Naive thymus-derived CD4-positive, alpha-beta T cell (primary cell): ENCODE measurements at regions of chr11 and their contacts with region 1.

Region 1: GRCh38 chr11:102341844-102342318 is 5.1 kb upstream of the BIRC2 start:
- DNase-seq: peak; percentile 20 to 76 (median 70)
- ATAC-seq: peak; percentile 61
- H3K4me3 ChIP-seq: no peak overlapping the region
- H3K4me3 Mint-ChIP-seq: peak overlapping the region in 1 of 10 donors; percentile 2
- H3K27ac ChIP-seq: no peak overlapping the region
- H3K27ac Mint-ChIP-seq: peak overlapping the region in 8 of 9 donors; percentile 17 to 84 (median 66)
- H3K4me1 ChIP-seq: peaks cover 5 to 11% of the 10 kb centered on the region in 2 donors
- H3K4me1 Mint-ChIP-seq: peaks cover 10 to 36% (median 22%) of the 10 kb centered on the region in 7 donors
- H3K27me3 ChIP-seq: no peaks in the 10 kb centered on the region
- H3K27me3 Mint-ChIP-seq: no peaks in the 10 kb centered on the region

Region 2: GRCh38 chr11:100863080-100863581 is 1478.8 kb before region 1 on chr11:
- CTCF ChIA-PET with region 1: no interaction called
- POLR2A ChIA-PET with region 1: no interaction called
- intact Hi-C with region 1: no loop called
- DNase-seq: no peak
- ATAC-seq: no peak
- H3K4me3 ChIP-seq: no peak overlapping the region
- H3K4me3 Mint-ChIP-seq: no peak overlapping the region
- H3K27ac ChIP-seq: no peak overlapping the region
- H3K27ac Mint-ChIP-seq: no peak overlapping the region
- H3K4me1 ChIP-seq: no peaks in the 10 kb centered on the region
- H3K4me1 Mint-ChIP-seq: no peaks in the 10 kb centered on the region
- H3K27me3 ChIP-seq: no peaks in the 10 kb centered on the region
- H3K27me3 Mint-ChIP-seq: no peaks in the 10 kb centered on the region

Region 3: DNA sequence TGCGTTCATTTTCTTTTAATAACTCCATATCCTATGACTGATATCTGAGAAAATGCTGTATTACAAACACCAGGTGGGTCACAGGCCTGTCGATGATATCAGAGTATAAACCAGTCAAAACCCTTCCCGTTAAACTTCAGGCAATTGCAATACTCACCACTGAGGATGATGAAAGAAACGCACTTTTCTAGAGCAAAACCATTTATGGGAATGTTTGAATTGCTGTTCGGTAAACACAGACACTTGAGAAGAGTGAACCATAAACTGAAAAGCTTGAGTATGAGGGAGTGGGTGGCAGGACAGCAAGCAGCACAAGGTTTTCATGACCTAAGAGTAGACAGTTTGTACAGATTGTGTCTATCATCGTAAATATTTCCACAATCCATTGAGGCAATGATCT is 566.8 kb before region 1 on chr11:
- CTCF ChIA-PET with region 1: no interaction called
- POLR2A ChIA-PET with region 1: no interaction called
- intact Hi-C with region 1: no loop called
- DNase-seq: no peak
- ATAC-seq: no peak
- H3K4me3 ChIP-seq: no peak overlapping the region
- H3K4me3 Mint-ChIP-seq: no peak overlapping the region
- H3K27ac ChIP-seq: no peak overlapping the region
- H3K27ac Mint-ChIP-seq: no peak overlapping the region
- H3K4me1 ChIP-seq: no peaks in the 10 kb centered on the region
- H3K4me1 Mint-ChIP-seq: no peaks in the 10 kb centered on the region
- H3K27me3 ChIP-seq: no peaks in the 10 kb centered on the region
- H3K27me3 Mint-ChIP-seq: no peaks in the 10 kb centered on the region

Region 4: DNA sequence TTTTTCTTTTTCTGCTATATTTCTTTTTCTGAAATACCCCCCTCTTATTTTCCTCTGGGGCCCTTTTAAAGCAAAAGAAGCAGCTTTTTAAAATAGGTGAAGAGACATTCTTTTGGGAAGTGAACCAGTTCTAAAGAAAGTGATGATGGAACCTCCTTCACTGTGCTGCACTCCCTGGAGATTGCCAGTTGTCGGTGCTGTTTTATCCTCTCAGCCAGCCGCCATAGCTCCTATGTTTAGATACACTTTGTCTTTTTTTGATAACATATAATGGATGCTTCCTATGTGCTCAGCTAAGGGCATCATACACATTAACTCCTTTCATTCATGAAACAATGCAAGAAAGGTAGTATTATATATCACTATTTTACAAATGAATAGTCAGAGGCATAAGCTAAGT is 280.6 kb before region 1 on chr11:
- CTCF ChIA-PET with region 1: no interaction called
- POLR2A ChIA-PET with region 1: no interaction called
- intact Hi-C with region 1: no loop called
- DNase-seq: no peak
- ATAC-seq: peak; percentile 12
- H3K4me3 ChIP-seq: no peak overlapping the region
- H3K4me3 Mint-ChIP-seq: no peak overlapping the region
- H3K27ac ChIP-seq: no peak overlapping the region
- H3K27ac Mint-ChIP-seq: no peak overlapping the region
- H3K4me1 ChIP-seq: no peaks in the 10 kb centered on the region
- H3K4me1 Mint-ChIP-seq: no peaks in the 10 kb centered on the region
- H3K27me3 ChIP-seq: no peaks in the 10 kb centered on the region
- H3K27me3 Mint-ChIP-seq: peaks cover 0 to 30% (median 23%) of the 10 kb centered on the region in 5 donors

Region 5: DNA sequence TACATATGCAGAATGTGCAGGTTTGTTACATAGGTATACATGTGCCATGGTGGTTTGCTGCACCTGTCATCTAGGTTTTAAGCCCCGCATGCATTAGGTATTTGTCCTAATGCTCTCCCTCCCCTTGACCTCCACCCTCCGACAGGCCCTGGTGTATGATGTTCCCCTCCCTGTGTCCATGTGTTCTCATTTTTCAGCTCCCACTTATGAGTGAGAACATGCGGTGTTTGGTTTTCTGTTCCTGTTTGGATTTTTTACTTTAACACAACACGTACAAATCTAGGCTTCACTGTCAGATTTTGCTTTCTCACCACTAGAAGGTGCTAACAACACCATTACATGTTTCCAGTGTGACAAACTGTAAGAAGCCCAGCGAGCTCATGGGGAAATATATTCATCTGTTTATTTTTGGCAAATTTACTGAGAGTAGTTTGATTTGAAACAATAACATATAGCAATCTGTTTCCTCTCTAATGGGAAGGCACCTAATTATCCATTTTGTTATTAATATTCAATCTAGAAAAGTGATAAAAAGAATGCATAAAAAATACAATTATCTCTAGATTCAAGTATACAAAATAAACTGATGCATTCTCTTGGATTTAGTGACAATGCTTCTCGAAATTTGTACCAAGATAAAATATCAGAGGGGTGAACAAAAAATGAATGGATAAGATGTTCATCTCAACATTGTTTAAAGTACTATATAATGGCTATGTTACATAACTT is 47.8 kb before region 1 on chr11:
- CTCF ChIA-PET with region 1: interaction called, 52 read pairs
- POLR2A ChIA-PET with region 1: interaction called, 9 read pairs
- intact Hi-C with region 1: loop called (anchors 1 kb)
- DNase-seq: peak in 7 of 9 donors; percentile 50 to 75 (median 66)
- ATAC-seq: peak; percentile 98
- H3K4me3 ChIP-seq: peak overlapping the region; percentile 49
- H3K4me3 Mint-ChIP-seq: peak overlapping the region; percentile 62 to 97 (median 82)
- H3K27ac ChIP-seq: peak overlapping the region; percentile 49
- H3K27ac Mint-ChIP-seq: peak overlapping the region; percentile 77 to 95 (median 91)
- H3K4me1 ChIP-seq: peaks cover 7 to 9% of the 10 kb centered on the region in 2 donors
- H3K4me1 Mint-ChIP-seq: peaks cover 10 to 44% (median 40%) of the 10 kb centered on the region in 7 donors
- H3K27me3 ChIP-seq: no peaks in the 10 kb centered on the region
- H3K27me3 Mint-ChIP-seq: no peaks in the 10 kb centered on the region

Region 6: DNA sequence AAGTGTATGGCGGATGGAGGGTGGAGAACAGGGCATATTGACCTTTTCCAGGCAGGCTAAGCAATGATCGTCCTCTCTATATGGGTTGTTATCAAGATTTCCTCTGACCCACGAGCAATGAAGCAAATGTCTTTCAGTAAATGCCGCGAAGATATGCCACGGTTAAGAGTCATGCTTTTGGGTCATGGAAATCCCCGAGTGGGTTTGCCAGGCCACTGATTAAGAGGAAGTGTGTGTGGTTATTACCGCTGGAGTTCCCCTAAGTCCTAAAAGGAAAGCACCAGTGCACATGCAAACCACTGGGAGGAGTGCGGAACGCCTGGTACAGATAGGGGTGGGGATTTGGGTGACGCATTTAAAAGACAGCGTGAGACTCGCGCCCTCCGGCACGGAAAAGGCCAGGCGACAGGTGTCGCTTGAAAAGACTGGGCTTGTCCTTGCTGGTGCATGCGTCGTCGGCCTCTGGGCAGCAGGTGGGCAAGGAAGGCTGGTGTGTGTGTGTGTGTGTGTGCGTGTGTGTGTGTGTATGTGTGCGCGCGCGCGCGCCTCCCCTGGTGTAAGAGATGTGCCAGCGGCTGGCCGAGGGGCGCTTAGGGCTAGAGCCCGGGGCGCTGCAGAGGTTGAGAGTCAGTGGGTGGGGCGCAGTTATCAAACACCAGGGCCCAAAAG is 24.6 kb before region 1 on chr11 and contains the start of gene BIRC3:
- CTCF ChIA-PET with region 1: interaction called, 4 read pairs
- POLR2A ChIA-PET with region 1: interaction called, 5 read pairs
- intact Hi-C with region 1: loop called (anchors 1 kb)
- DNase-seq: peak; percentile 77 to 98 (median 93)
- ATAC-seq: peak; percentile 94
- H3K4me3 ChIP-seq: peak within 1 kb of the TSS; percentile 74
- H3K4me3 Mint-ChIP-seq: peak within 1 kb of the TSS; percentile 85 to 98 (median 96)
- H3K27ac ChIP-seq: peak within 1 kb of the TSS; percentile 97
- H3K27ac Mint-ChIP-seq: peak within 1 kb of the TSS; percentile 93 to 99 (median 98)
- H3K4me1 ChIP-seq: peaks cover 43 to 58% of the 10 kb centered on the region in 2 donors
- H3K4me1 Mint-ChIP-seq: peaks cover 44 to 87% (median 74%) of the 10 kb centered on the region in 7 donors
- H3K27me3 ChIP-seq: no peaks in the 10 kb centered on the region
- H3K27me3 Mint-ChIP-seq: peaks cover 0 to 2% (median 0%) of the 10 kb centered on the region in 5 donors
- total RNA-seq, gene BIRC3: 62.3 to 160 (median 128) TPM

Region 7: GRCh38 chr11:102367364-102367763 is 25.5 kb after region 1 on chr11:
- CTCF ChIA-PET with region 1: interaction called, 10 read pairs
- POLR2A ChIA-PET with region 1: interaction called, 4 read pairs
- intact Hi-C with region 1: loop called in 1 of 2 experiments (anchors 1 kb)
- DNase-seq: peak in 6 of 9 donors; percentile 33 to 65 (median 56)
- ATAC-seq: peak; percentile 77
- H3K4me3 ChIP-seq: no peak overlapping the region
- H3K4me3 Mint-ChIP-seq: peak overlapping the region in 3 of 10 donors; percentile 4 to 28 (median 19)
- H3K27ac ChIP-seq: no peak overlapping the region
- H3K27ac Mint-ChIP-seq: peak overlapping the region; percentile 16 to 93 (median 83)
- H3K4me1 ChIP-seq: peaks cover 0 to 12% of the 10 kb centered on the region in 2 donors
- H3K4me1 Mint-ChIP-seq: peaks cover 9 to 48% (median 33%) of the 10 kb centered on the region in 7 donors
- H3K27me3 ChIP-seq: no peaks in the 10 kb centered on the region
- H3K27me3 Mint-ChIP-seq: no peaks in the 10 kb centered on the region

Region 8: DNA sequence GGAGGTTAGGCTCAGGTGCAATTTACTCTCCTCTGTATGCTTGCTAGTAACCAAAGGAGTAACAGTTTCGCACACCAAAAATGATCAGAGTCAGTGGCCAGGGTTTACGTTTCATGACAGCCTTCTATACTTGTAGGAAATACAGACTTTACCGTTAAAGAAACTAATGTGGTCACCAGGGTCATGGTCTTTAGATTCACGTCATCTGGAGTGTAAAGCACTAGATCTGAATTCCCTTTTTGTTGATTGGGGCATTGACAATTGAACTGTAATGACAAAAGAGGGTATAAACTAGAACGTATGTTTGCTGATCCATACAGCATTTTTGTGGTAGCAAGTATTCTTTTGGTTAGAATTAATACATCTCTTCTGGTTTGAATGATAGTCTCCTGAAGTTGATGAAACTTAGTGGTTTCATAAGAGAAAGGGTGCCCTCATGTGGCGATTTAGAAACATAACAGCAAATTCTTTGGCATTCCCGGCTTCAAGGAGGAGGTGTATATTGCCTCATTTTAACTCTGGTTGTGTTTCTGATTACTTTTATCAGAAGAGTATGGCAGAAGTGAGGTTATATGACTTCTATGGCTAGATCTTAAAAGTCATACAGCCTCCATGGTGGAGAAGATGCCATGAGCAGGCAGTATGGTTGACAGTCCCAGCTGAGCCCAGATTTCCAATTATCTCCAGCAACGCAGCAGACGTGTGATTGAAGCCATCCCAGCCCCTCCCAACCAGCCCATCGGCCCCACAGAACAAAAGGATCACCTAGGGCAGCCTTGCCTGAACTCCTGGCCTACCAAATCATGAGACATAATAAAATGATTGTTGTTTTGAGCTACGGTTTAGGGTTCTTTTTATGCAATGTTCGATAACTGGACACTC is 153.5 kb after region 1 on chr11:
- CTCF ChIA-PET with region 1: interaction called, 18 read pairs
- POLR2A ChIA-PET with region 1: interaction called, 4 read pairs
- intact Hi-C with region 1: loop called (anchors 1 kb)
- DNase-seq: peak in 7 of 9 donors; percentile 54 to 79 (median 71)
- ATAC-seq: peak; percentile 91
- H3K4me3 ChIP-seq: no peak overlapping the region
- H3K4me3 Mint-ChIP-seq: peak overlapping the region in 1 of 10 donors; percentile 18
- H3K27ac ChIP-seq: no peak overlapping the region
- H3K27ac Mint-ChIP-seq: peak overlapping the region in 4 of 9 donors; percentile 2 to 40 (median 12)
- H3K4me1 ChIP-seq: no peaks in the 10 kb centered on the region
- H3K4me1 Mint-ChIP-seq: peaks cover 4 to 26% (median 10%) of the 10 kb centered on the region in 7 donors
- H3K27me3 ChIP-seq: no peaks in the 10 kb centered on the region
- H3K27me3 Mint-ChIP-seq: peaks cover 0 to 22% (median 0%) of the 10 kb centered on the region in 5 donors

Region 9: DNA sequence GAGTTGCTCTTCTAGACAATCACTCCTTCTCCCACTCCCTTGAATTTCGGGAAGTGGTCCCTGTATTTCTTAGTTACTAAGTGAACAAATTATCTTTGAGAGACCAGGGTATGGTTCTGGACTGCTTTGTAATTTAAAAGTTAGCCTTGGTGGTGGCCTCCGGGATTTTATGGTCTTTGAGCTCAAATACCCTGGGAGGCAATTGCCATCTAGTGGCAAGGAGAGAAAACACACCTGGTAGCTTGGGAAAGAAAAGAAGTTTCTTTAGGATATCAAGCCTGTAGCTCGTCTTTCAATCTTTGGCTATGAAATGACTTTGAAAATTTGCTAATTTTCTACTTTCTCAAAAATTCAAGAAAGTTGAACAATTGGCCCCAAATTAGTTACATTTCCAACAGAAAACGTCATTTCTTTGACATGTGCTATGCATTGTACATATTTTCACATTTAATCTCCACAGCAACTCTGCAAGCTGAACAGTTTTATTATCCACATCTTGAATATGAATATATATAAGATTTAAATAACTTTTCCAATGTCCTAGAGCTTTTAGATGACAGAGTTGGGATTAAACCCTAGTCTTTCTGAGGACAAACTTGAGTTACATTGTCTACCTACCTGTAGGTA is 324.6 kb after region 1 on chr11:
- CTCF ChIA-PET with region 1: interaction called, 36 read pairs
- POLR2A ChIA-PET with region 1: interaction called, 3 read pairs
- intact Hi-C with region 1: loop called (anchors 1 kb)
- DNase-seq: peak in 7 of 9 donors; percentile 4 to 42 (median 23)
- ATAC-seq: peak; percentile 51
- H3K4me3 ChIP-seq: no peak overlapping the region
- H3K4me3 Mint-ChIP-seq: no peak overlapping the region
- H3K27ac ChIP-seq: no peak overlapping the region
- H3K27ac Mint-ChIP-seq: no peak overlapping the region
- H3K4me1 ChIP-seq: no peaks in the 10 kb centered on the region
- H3K4me1 Mint-ChIP-seq: no peaks in the 10 kb centered on the region
- H3K27me3 ChIP-seq: no peaks in the 10 kb centered on the region
- H3K27me3 Mint-ChIP-seq: peaks cover 0 to 15% (median 6%) of the 10 kb centered on the region in 5 donors